ENCODE measurements at regions of chr12 and their contacts with region 1.

Region 1: DNA sequence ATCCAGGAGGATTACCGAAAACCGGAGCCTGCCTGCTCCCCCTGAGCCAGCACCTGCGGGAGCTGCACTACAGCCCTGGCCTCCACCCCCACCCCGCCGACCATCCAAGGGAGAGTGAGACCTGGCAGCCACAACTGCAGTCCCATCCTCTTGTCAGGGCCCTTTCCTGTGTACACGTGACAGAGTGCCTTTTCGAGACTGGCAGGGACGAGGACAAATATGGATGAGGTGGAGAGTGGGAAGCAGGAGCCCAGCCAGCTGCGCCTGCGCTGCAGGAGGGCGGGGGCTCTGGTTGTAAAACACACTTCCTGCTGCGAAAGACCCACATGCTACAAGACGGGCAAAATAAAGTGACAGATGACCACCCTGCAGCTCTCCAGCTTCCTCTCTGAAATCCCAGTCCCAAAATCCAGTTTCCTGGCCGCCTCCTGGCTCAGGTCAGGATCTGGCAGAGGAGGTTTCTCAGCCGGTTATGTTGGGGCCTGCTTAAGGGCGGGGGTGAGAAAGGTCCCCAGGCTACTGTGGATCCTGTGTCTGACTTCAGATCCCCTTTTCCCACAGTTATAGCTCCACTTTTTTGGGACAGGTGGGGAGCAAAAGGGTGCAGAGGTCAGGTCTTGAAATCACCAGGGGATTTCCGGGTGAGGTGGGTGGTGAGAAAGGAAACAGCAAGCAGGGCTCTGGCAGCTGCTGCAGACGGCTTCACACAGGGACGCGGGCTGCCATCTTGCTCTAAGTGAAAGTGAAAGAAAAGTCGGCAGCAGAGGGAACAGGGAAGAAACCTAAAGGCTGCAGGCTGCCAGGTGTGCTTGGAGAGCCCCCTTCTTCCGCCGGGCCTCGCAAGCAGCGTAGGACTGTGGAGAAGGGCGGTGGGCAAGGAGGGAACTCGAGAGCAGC is at the start of gene TAPBPL:
- DNase-seq: peak; percentile 24
- H3K4me3 ChIP-seq: peak within 1 kb of the TSS; percentile 75
- CTCF ChIP-seq: no peak

Region 2: GRCh38 chr12:6376079-6376869 is 75.3 kb before region 1 on chr12:
- CTCF ChIA-PET with region 1: no interaction called
- POLR2A ChIA-PET with region 1: no interaction called
- DNase-seq: no peak
- H3K4me3 ChIP-seq: no peak overlapping the region
- CTCF ChIP-seq: peak; percentile 61

Region 3: DNA sequence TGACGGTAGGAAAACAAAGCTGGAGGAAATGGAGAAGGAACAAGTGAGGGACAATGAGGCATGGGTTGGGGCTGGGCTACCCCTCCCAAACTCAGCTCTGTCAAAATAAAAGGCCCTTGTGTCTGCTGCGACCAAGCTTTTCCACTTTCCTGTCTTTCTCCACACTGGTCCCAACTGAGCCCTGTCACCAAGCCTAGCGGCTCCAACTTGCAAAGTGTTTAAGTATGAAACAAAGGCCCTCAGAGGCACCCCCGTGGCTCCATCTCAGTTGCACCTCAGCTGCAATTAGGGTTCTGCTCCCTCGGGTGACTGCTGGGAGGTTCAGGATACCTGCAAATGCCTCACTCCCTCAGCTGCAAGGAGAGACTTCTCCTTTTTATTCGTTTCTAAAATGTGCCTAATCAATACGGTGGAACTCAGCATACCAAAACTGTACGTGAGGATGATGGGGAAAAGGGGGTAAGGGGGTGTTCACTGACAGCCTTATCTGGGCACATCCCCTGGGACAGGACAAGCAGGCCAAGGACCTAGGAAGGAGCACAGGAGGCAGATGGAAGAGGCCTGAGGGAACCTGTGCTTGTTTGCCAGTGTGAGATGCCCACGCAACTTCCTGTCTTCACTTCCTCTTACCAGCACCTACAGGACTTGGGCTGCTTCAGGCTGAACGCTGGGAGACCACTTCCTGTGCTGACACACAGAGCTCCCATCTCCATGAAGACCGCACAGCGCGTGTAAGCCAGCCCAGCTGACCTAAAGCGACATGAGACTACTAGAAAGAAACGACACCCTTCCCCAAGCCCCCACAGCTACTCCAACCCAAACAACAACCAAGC is 10.0 kb after region 1 on chr12:
- CTCF ChIA-PET with region 1: interaction called, 97 read pairs
- POLR2A ChIA-PET with region 1: interaction called, 3 read pairs
- DNase-seq: no peak
- H3K4me3 ChIP-seq: no peak overlapping the region
- CTCF ChIP-seq: no peak

Region 4: DNA sequence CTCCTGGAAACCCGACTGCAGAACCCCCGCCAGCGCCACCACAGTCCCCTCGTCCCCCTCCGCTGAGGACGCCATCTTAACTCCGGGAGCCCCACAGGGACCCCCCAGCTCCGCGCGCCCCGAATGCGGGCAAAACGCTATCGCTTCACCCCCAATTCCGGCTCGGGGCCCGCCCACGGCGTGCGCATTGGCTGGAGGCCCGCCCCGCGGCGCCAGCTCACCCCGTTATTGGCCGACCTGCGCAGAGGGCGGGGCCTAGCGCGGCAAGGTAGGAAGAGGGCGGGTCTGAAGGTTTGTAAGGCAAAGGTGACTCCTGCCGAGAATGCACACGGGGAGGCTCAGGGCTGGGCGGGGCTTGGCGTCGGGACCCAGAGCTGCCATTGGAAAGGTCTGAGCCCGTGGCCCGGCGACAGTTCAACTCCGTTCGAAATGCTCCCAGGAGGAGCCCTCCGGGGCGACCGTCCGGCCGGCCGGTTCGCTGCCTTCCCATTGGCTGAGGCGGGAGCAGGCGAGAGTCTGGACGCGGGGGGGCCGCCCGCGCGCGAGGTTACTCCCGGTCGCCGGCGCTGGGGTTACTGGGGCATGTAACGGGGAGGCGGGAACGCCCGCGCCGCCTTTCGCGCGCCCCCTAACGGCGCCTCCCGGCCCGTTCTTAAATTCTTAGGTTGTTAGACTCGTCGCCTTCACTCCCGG is 566.9 kb after region 1 on chr12 and contains the start of gene LPCAT3:
- CTCF ChIA-PET with region 1: no interaction called
- POLR2A ChIA-PET with region 1: no interaction called
- DNase-seq: peak; percentile 50
- H3K4me3 ChIP-seq: peak within 1 kb of the TSS; percentile 89
- CTCF ChIP-seq: peak; percentile 90